ENCODE measurements at regions of chr7 and their contacts with region 1.

Region 1: DNA sequence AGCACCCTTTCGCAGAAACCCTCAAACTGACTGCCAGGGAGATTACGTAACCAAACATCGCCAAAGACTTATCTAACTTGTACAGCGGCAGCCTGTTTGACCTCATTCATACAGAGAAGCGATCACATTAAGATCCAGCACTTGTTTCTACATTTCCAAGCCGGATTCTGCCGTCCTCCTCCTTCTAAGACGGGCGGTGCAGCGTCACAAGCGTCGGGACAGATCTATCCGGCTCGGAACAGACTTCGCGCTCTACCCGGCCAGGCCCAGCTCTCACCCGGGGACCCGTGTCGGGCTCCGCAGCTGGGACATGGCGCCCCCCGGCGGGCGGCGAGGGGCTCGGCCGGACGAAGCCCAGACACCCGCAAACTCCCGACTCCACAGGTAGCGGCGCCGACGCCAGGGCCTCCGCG is 373 bp downstream of the H2AZ2 start:
- DNase-seq: peak; percentile 96

Region 2: GRCh38 chr7:44573464-44574286 is 273.8 kb before region 1 on chr7 and contains the start of gene DDX56:
- intact Hi-C with region 1: loop called in 1 of 2 experiments (anchors 5 kb)
- DNase-seq: peak; percentile 99
- total RNA-seq, gene DDX56: 33.9 to 40.2 TPM

Region 3: GRCh38 chr7:44587843-44588711 is 259.4 kb before region 1 on chr7:
- intact Hi-C with region 1: loop called in 1 of 2 experiments (anchors 5 kb)
- DNase-seq: peak; percentile 32

Region 4: DNA sequence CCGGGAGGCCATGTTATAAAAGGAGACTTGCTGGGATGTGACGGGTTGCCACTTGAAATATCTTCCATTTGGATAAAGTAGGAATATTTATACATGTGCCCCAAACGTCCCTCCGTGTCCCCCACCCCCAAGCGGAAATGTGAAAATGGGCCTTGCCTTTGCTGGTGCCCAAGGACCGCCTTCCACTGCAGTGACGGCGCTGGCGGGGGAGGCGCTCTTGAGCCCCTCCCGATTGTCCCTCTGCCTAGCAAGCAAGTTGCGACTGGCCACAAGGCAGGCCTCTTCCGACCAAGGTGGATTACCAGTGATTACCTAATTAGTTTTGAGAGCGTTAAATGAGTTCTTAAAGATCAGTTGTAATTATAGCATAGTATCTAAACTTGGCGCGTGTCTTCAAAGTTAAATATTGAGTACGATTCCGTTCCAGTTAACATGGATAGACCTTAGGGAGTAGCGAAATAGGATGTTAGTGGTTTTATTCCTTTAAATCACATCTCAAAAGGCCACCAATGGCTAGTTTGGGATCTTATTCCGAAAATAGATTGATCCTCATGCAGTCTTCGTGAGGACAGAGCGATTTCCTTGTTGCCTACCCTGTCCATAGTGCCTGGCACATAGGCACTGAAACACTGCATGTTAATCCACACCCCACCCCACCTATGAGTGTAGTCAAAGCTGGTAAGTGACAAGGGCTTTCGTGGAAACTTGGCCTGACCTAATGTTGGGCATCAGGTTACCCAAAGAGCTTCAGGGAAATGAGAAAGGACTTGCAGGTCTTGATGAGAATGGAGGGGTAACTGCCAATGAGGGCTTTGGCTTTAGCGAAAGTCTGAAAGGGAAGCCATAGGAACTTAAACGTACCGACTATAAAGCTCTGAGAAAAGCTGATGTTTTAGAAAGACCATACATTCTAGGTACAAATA is 49.9 kb before region 1 on chr7:
- intact Hi-C with region 1: loop called in 1 of 2 experiments (anchors 10 kb)
- DNase-seq: peak; percentile 96